Prostate gland (tissue), 2 donors: ENCODE measurements at regions of chr7 and their contacts with region 1.

Region 1: GRCh38 chr7:35975851-35976454 is 175.1 kb downstream of the SEPTIN7 start:
- DNase-seq: peak; percentile 73
- H3K4me3 ChIP-seq: no peak overlapping the region
- H3K27ac ChIP-seq: no peak overlapping the region
- H3K4me1 ChIP-seq: no peaks in the 10 kb centered on the region
- H3K27me3 ChIP-seq: no peaks in the 10 kb centered on the region
- CTCF ChIP-seq: peak; percentile 69 to 75 (median 70)
- POLR2A ChIP-seq: no peak

Region 2: GRCh38 chr7:35716038-35716803 is 259.7 kb before region 1 on chr7:
- intact Hi-C with region 1: loop called (anchors 10 kb)
- DNase-seq: peak; percentile 42
- H3K4me3 ChIP-seq: no peak overlapping the region
- H3K27ac ChIP-seq: no peak overlapping the region
- H3K4me1 ChIP-seq: no peaks in the 10 kb centered on the region
- H3K27me3 ChIP-seq: no peaks in the 10 kb centered on the region
- CTCF ChIP-seq: no peak
- POLR2A ChIP-seq: no peak